ENCODE measurements at regions of chr18 and their contacts with region 1.

Region 1: GRCh38 chr18:29726646-29727045 is 1315.9 kb downstream of the DSC3 start:
- DNase-seq: no peak
- ATAC-seq: no peak
- H3K4me3 ChIP-seq: no peak overlapping the region
- H3K27ac ChIP-seq: no peak overlapping the region
- H3K4me1 ChIP-seq: no peaks in the 10 kb centered on the region
- H3K27me3 ChIP-seq: no peaks in the 10 kb centered on the region

Region 2: GRCh38 chr18:29664278-29665036 is 62.2 kb before region 1 on chr18:
- intact Hi-C with region 1: no loop called
- DNase-seq: no peak
- ATAC-seq: no peak
- H3K4me3 ChIP-seq: no peak overlapping the region
- H3K27ac ChIP-seq: no peak overlapping the region
- H3K4me1 ChIP-seq: no peaks in the 10 kb centered on the region
- H3K27me3 ChIP-seq: no peaks in the 10 kb centered on the region

Region 3: DNA sequence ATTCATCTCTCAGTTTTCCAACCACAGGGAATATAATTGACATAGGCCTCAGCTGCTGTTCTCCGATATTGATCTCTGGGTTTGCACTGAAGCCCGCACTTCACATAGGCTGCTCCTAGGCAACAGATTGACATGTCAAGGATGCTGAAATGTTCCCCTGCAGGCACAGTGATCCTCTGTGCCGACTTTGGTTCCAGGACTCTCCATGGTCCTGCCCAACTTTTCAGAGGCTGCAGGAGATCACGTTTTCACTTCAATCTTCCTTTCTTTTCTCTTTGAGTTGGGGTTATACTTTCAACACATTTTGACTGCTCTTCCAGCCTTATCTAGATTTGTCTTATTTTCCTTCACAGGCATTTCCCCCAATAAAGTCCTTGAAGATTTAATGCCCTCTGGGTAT is 45.1 kb before region 1 on chr18:
- intact Hi-C with region 1: loop called in 1 of 4 experiments (anchors 5 kb)
- DNase-seq: no peak
- ATAC-seq: no peak
- H3K4me3 ChIP-seq: no peak overlapping the region
- H3K27ac ChIP-seq: no peak overlapping the region
- H3K4me1 ChIP-seq: no peaks in the 10 kb centered on the region
- H3K27me3 ChIP-seq: no peaks in the 10 kb centered on the region

Region 4: DNA sequence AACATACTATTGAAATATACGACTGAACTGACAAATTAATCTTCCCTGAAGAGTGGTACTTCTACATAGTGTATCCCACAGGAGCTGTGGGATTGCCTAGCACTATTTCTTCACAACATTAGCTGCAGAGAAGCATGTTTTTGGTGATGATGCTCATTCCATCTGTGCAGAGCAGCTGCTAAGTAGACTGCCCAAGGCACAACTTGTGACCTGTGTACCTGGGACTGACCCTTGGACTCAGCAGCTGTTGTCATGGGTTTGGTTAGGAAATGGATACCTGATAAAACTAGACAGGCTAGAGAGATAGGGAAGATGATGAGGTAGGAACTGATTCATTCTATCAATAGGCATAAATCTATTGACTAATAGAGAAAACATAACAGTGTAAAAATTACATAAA is 111.9 kb after region 1 on chr18:
- intact Hi-C with region 1: loop called in 1 of 4 experiments (anchors 10 kb)
- DNase-seq: no peak
- ATAC-seq: no peak
- H3K4me3 ChIP-seq: no peak overlapping the region
- H3K27ac ChIP-seq: no peak overlapping the region
- H3K4me1 ChIP-seq: no peaks in the 10 kb centered on the region
- H3K27me3 ChIP-seq: no peaks in the 10 kb centered on the region